ENCODE measurements at regions of chr10 and their contacts with region 1.

Region 1: GRCh38 chr10:74244097-74244685 is 93.2 kb downstream of the ADK start:
- DNase-seq: peak; percentile 42
- ATAC-seq: no peak
- H3K4me3 ChIP-seq: no peak overlapping the region
- H3K27ac ChIP-seq: no peak overlapping the region
- H3K4me1 ChIP-seq: no peaks in the 10 kb centered on the region
- H3K27me3 ChIP-seq: no peaks in the 10 kb centered on the region
- CTCF ChIP-seq: peak; percentile 32 to 65 (median 60)
- POLR2A ChIP-seq: no peak
- RAD21 ChIP-seq: peak; percentile 73

Region 2: GRCh38 chr10:74255888-74256357 is 11.7 kb after region 1 on chr10:
- CTCF ChIA-PET with region 1: interaction called, 14 read pairs
- POLR2A ChIA-PET with region 1: no interaction called
- RAD21 ChIA-PET with region 1: no interaction called
- intact Hi-C with region 1: no loop called
- DNase-seq: no peak
- ATAC-seq: no peak
- H3K4me3 ChIP-seq: no peak overlapping the region
- H3K27ac ChIP-seq: no peak overlapping the region
- H3K4me1 ChIP-seq: peaks cover 10 to 16% of the 10 kb centered on the region in 2 experiments; a peak in 3 of 4 replicates
- H3K27me3 ChIP-seq: no peaks in the 10 kb centered on the region
- CTCF ChIP-seq: no peak
- POLR2A ChIP-seq: no peak
- RAD21 ChIP-seq: no peak

Region 3: GRCh38 chr10:74651565-74651964 is 407.4 kb after region 1 on chr10:
- CTCF ChIA-PET with region 1: no interaction called
- POLR2A ChIA-PET with region 1: no interaction called
- RAD21 ChIA-PET with region 1: no interaction called
- intact Hi-C with region 1: no loop called
- DNase-seq: no peak
- ATAC-seq: no peak
- H3K4me3 ChIP-seq: no peak overlapping the region
- H3K27ac ChIP-seq: no peak overlapping the region
- H3K4me1 ChIP-seq: no peaks in the 10 kb centered on the region
- H3K27me3 ChIP-seq: no peaks in the 10 kb centered on the region
- CTCF ChIP-seq: no peak
- POLR2A ChIP-seq: no peak
- RAD21 ChIP-seq: no peak

Measured in HCT116 (cell line).